ENCODE measurements at regions of chr1 and their contacts with region 1.

Region 1: GRCh38 chr1:63537940-63538339 is 14.6 kb downstream of the EFCAB7 start:
- DNase-seq: no peak
- CTCF ChIP-seq: peak; percentile 25

Region 2: DNA sequence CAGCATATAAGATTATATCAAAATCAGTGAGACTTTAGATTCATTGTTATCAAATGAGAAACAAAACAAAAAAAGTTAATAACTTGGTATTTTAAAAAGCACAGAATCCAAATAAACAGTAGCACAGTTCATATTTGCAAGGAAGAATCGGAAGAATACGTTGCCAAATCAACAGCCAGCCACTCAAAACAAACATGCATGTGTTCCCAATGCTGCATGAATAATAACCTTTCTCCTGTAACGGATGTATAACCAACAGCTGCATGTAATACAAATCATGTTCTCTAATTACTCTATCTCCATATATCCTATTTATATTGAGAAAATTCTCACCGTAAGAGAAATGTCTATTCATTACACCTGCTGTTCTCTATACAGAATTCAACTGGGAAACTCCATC is 314.5 kb before region 1 on chr1:
- CTCF ChIA-PET with region 1: no interaction called
- POLR2A ChIA-PET with region 1: no interaction called
- DNase-seq: no peak
- CTCF ChIP-seq: no peak

Region 3: GRCh38 chr1:63316984-63317816 is 220.7 kb before region 1 on chr1:
- CTCF ChIA-PET with region 1: interaction called, 13 read pairs
- POLR2A ChIA-PET with region 1: no interaction called
- DNase-seq: peak; percentile 85
- CTCF ChIP-seq: peak; percentile 88

Region 4: GRCh38 chr1:63651161-63651701 is 113.3 kb after region 1 on chr1:
- CTCF ChIA-PET with region 1: no interaction called
- POLR2A ChIA-PET with region 1: no interaction called
- DNase-seq: no peak
- CTCF ChIP-seq: no peak